A549 (cell line): ENCODE measurements at regions of chr17 and their contacts with region 1.

Region 1: DNA sequence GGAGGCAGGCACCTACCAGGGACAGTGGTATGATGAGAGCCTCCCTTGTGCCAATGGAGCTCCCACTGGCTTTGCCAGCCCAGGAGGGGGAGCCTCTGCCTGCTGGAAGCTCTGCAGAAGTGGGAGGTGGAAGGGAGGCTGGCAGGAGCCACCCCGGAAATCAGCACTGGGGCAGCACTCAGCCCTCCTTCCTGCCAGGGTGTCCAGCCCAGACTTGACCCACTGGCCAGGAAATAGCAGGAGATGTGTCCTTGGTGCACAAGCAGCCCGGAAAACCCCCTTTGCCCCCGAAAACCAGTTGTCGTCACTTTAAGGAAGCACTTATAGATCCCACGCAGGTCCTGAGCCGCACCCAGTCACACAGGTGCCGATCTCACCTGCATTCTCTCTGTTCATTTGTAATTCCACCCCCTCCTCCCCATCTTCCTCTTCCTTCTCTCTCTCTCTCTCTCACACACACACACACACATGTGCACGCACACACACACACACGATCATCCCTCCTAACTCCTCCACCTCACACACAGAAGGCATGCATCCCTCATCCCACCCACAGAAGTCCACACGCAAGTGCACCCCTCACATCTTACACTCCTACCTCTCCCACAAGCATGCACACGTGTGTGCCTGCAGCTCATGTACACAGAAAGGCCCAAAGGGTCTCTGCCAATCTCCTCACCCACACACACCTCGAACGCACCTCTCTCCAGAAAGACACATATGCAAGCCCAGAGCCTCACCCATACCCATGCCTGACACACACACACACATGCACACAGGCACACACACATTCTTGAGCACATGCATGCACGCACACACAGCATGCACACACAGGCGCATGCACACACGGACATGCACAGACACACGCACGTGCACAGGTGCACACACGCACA is 49.1 kb upstream of the CACNG4 start:
- DNase-seq: peak; percentile 64 to 65
- ATAC-seq: peak; percentile 94 to 97
- H3K4me3 ChIP-seq: no peak overlapping the region
- H3K27ac ChIP-seq: peak overlapping the region in 1 of 2 experiments; percentile 43; a peak in 2 of 6 replicates
- H3K4me1 ChIP-seq: no peaks in the 10 kb centered on the region
- CTCF ChIP-seq: peak; percentile 47
- EP300 ChIP-seq: no peak
- POLR2A ChIP-seq: no peak; the same call in 1 of the 2 replicates
- RAD21 ChIP-seq: peak; percentile 68 to 84

Region 2: GRCh38 chr17:66791347-66791746 is 124.1 kb before region 1 on chr17:
- CTCF ChIA-PET with region 1: no interaction called
- POLR2A ChIA-PET with region 1: no interaction called
- DNase-seq: no peak
- ATAC-seq: no peak; a peak in 1 of 6 replicates
- H3K4me3 ChIP-seq: no peak overlapping the region
- H3K27ac ChIP-seq: no peak overlapping the region
- H3K4me1 ChIP-seq: no peaks in the 10 kb centered on the region
- CTCF ChIP-seq: no peak
- EP300 ChIP-seq: no peak
- POLR2A ChIP-seq: no peak
- RAD21 ChIP-seq: no peak

Region 3: DNA sequence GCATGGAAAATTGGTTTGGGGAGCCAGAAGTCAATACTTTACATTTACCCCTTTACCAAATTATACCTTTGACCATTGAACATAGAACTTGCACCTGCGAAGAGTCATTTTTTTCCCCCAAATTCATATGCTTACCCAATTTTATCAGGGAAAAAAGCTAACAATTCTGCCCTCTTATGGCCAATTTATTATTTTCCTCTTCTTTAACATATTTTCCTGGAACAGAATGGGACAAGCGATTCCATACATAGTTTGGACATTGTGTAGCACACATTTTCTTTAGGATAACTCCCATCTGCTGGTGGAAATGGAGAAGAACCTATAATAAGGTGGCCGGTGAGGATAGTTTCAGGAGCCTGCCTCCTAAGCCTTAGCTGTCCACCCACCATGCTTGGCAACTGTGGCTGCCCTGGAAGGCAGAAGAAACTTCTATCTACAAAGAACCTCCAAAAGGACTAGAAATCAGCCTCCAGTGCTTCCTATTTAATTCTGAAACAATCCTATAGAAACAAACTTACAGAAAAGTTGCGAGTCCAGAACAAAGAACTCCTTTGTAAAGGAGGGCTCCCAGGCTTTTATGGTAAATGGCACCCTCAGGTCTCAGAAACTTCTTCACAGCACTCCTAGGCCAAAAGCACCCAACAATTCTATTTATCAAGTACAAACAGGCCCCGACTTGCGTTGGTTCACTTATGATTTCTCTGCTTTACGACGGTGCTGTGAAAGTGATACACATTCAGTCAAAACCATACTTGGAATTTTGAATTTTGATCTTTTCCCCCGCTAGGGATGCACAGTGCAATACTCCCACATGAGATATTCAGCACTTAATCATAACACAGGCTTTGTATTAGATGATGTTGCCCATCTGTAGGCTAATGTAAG is 15.1 kb before region 1 on chr17:
- CTCF ChIA-PET with region 1: interaction called, 11 read pairs
- POLR2A ChIA-PET with region 1: no interaction called
- DNase-seq: peak; percentile 32 to 39
- ATAC-seq: peak in 1 of 2 experiments; percentile 30; a peak in 3 of 6 replicates
- H3K4me3 ChIP-seq: no peak overlapping the region
- H3K27ac ChIP-seq: 0 out of 6 replicates have a peak overlapping the region, but pooled peaks of 1 of the 2 experiments have one; percentile 9
- H3K4me1 ChIP-seq: peaks cover 19% of the 10 kb centered on the region
- CTCF ChIP-seq: peak; percentile 82
- EP300 ChIP-seq: no peak
- POLR2A ChIP-seq: no peak
- RAD21 ChIP-seq: peak; percentile 71 to 72

Region 4: GRCh38 chr17:66930933-66931332 is 15.5 kb after region 1 on chr17:
- CTCF ChIA-PET with region 1: interaction called, 22 read pairs
- POLR2A ChIA-PET with region 1: no interaction called
- DNase-seq: peak in 1 of 2 experiments; percentile 48
- ATAC-seq: peak; percentile 61 to 80; a peak in 4 of 6 replicates
- H3K4me3 ChIP-seq: no peak overlapping the region
- H3K27ac ChIP-seq: no peak overlapping the region
- H3K4me1 ChIP-seq: no peaks in the 10 kb centered on the region
- CTCF ChIP-seq: no peak
- EP300 ChIP-seq: no peak
- POLR2A ChIP-seq: no peak
- RAD21 ChIP-seq: no peak

Region 5: DNA sequence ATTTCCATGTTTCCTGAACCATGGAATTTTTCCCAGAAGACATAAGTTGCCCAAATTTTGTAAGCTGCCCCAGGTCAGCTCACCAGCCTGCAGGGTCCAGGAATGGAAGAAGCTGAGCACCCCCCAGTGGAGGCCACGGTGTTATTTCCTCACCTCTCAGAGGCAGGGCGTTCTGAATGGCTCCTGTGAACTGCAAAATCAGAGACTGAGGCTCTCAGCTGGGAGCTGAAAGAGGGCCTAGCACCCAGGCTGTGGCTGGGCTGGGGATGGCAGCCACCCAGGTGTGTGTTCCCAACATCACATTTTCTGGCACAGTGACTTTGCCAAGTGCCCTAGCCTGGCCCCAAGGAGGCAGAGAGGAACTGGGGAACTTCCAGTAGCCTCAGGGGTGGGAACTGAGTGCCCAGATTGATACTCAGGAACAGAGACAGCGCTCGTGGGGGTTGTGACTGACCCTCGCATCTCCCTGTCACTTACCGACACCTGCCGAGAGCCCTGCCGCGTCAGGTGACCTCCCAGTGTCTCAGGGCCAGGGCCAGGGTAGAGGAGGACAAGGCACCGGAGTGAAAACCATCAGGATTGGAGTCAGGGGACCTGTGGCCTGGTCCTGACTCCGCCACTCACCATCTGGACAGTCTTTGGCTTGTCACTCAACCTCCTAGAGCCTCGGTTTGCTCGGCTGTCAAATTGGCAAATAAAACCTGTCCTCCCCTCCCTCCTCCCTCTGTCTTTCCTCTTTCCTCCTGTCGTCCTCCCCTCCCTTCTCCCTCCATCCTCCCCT is 60.3 kb after region 1 on chr17:
- CTCF ChIA-PET with region 1: interaction called, 20 read pairs
- POLR2A ChIA-PET with region 1: no interaction called
- DNase-seq: peak; percentile 60 to 70
- ATAC-seq: peak; percentile 54 to 84; a peak in 5 of 6 replicates
- H3K4me3 ChIP-seq: no peak overlapping the region
- H3K27ac ChIP-seq: peak overlapping the region in 1 of 2 experiments; percentile 34; a peak in 3 of 6 replicates
- H3K4me1 ChIP-seq: peaks cover 14% of the 10 kb centered on the region
- CTCF ChIP-seq: peak; percentile 53
- EP300 ChIP-seq: no peak
- POLR2A ChIP-seq: no peak
- RAD21 ChIP-seq: peak; percentile 68 to 82

Region 6: DNA sequence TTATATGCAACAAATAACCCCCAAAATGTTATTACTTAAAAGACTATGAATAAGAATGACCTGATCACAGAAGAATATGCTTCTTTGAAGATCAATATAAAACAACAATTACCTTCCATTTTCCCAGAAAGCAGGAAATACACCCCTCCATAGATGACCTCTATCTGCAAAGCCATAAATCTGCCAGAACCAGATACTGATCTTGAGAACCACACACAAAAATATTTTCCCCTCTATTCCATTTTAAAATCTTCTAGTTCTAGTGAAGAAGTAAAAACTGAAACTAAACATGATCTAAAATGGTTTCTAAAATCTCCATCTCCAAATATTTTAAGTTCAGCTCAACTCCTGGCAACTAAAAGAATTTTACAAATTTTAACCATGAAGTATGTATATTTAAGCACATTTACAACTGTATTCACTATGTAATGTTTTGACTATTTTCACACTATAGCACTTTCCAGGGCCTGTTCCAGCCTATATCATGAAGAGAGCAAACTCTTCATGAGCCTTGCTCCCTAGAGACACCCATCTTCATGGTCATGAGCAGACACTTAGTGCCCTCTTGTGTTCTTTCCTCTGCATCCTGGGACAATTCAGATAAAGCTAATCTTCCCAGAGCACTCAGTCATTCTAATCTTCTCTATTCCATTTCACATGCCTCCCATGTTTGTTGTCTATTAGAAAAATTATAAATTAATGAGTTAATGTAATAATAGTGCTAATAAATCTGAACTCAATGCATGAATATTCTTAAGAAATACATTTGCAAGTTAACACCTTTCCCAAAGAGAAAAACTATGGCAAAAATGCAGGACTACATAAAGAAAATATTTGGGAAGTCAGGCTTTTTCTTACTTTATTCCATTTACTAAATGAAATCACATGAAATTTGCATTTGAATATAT is 242.5 kb after region 1 on chr17:
- CTCF ChIA-PET with region 1: interaction called, 16 read pairs
- POLR2A ChIA-PET with region 1: no interaction called
- DNase-seq: peak; percentile 28 to 71
- ATAC-seq: peak; percentile 95 to 97
- H3K4me3 ChIP-seq: no peak overlapping the region
- H3K27ac ChIP-seq: no peak overlapping the region
- H3K4me1 ChIP-seq: peaks cover 4% of the 10 kb centered on the region; the same call in 1 of the 3 replicates
- CTCF ChIP-seq: peak; percentile 84
- EP300 ChIP-seq: no peak
- POLR2A ChIP-seq: no peak
- RAD21 ChIP-seq: peak; percentile 85 to 89